ENCODE measurements at regions of chr12 and their contacts with region 1.

Region 1: GRCh38 chr12:25958428-25959070 is at the start of gene RASSF8:
- DNase-seq: peak; percentile 35 to 87
- H3K4me3 ChIP-seq: peak within 1 kb of the TSS; percentile 84
- H3K27ac ChIP-seq: peak within 1 kb of the TSS; percentile 58
- H3K4me1 ChIP-seq: peaks cover 26% of the 10 kb centered on the region
- H3K27me3 ChIP-seq: no peaks in the 10 kb centered on the region
- CTCF ChIP-seq: no peak
- total RNA-seq, gene RASSF8: 26.5 and 30.6 TPM in 2 replicates

Region 2: DNA sequence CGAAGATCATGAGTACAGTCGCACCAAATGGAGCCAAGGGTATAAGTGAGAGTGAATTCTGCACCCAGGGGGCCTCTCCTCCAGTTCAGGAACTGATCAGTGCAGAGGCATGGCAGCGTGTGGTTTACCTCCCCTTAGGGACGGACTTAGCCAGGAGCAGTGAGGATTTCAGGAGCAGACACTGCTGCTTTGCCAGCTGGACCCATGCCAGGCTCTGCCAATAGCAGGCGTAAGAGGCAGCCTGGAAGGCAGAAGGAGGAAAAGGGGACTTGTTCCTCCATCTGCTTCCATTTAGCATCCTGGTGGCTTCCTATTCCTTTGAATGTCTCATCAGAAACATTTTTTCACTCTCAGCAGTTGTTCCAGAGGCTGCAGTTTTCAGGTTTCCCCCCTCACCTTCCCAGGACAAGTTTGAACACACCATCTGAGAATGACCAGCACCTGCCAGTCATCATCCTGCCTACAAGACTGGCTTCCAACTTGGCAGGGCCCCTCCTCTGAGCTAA is 268.5 kb before region 1 on chr12:
- CTCF ChIA-PET with region 1: no interaction called
- POLR2A ChIA-PET with region 1: interaction called, 14 read pairs
- intact Hi-C with region 1: no loop called
- DNase-seq: no peak
- H3K4me3 ChIP-seq: no peak overlapping the region
- H3K27ac ChIP-seq: no peak overlapping the region
- H3K4me1 ChIP-seq: no peaks in the 10 kb centered on the region
- H3K27me3 ChIP-seq: no peaks in the 10 kb centered on the region
- CTCF ChIP-seq: no peak

Region 3: GRCh38 chr12:25997201-25997963 is 38.8 kb after region 1 on chr12:
- CTCF ChIA-PET with region 1: interaction called, 11 read pairs
- POLR2A ChIA-PET with region 1: interaction called, 5 read pairs
- intact Hi-C with region 1: no loop called
- DNase-seq: peak in 1 of 2 experiments; percentile 84
- H3K4me3 ChIP-seq: no peak overlapping the region
- H3K27ac ChIP-seq: no peak overlapping the region
- H3K4me1 ChIP-seq: peaks cover 13% of the 10 kb centered on the region
- H3K27me3 ChIP-seq: no peaks in the 10 kb centered on the region
- CTCF ChIP-seq: no peak

Region 4: GRCh38 chr12:26028953-26029735 is 70.6 kb after region 1 on chr12:
- CTCF ChIA-PET with region 1: no interaction called
- POLR2A ChIA-PET with region 1: no interaction called
- intact Hi-C with region 1: loop called (anchors 5 kb)
- DNase-seq: peak in 1 of 2 experiments; percentile 42
- H3K4me3 ChIP-seq: no peak overlapping the region
- H3K27ac ChIP-seq: no peak overlapping the region
- H3K4me1 ChIP-seq: peaks cover 16% of the 10 kb centered on the region
- H3K27me3 ChIP-seq: no peaks in the 10 kb centered on the region
- CTCF ChIP-seq: peak; percentile 87

Region 5: GRCh38 chr12:26226629-26227360 is 268.2 kb after region 1 on chr12:
- CTCF ChIA-PET with region 1: no interaction called
- POLR2A ChIA-PET with region 1: no interaction called
- intact Hi-C with region 1: loop called (anchors 10 kb)
- DNase-seq: peak in 1 of 2 experiments; percentile 68
- H3K4me3 ChIP-seq: peak overlapping the region; percentile 52; the same call in 1 of the 2 replicates
- H3K27ac ChIP-seq: no peak overlapping the region
- H3K4me1 ChIP-seq: peaks cover 17% of the 10 kb centered on the region; the same call in 1 of the 2 replicates
- H3K27me3 ChIP-seq: no peaks in the 10 kb centered on the region
- CTCF ChIP-seq: no peak

Measured in PC-9 (cell line).